Activated naive CD4-positive, alpha-beta T cell treated with anti-CD3 and anti-CD28 coated beads for 36 hours (primary cell): ENCODE measurements at regions of chr17 and their contacts with region 1.

Region 1: GRCh38 chr17:30116661-30117551 is at the start of gene NSRP1:
- DNase-seq: peak; percentile 98
- H3K4me3 Mint-ChIP-seq: peak within 1 kb of the TSS; percentile 97
- H3K27ac Mint-ChIP-seq: peak within 1 kb of the TSS; percentile 99
- H3K4me1 Mint-ChIP-seq: peaks cover 48% of the 10 kb centered on the region
- H3K27me3 Mint-ChIP-seq: no peaks in the 10 kb centered on the region
- total RNA-seq, gene NSRP1: 21.4 to 21.5 TPM

Region 2: GRCh38 chr17:29369831-29370735 is 746.8 kb before region 1 on chr17:
- CTCF ChIA-PET with region 1: no interaction called
- intact Hi-C with region 1: no loop called
- DNase-seq: peak; percentile 59
- H3K4me3 Mint-ChIP-seq: no peak overlapping the region
- H3K27ac Mint-ChIP-seq: no peak overlapping the region
- H3K4me1 Mint-ChIP-seq: no peaks in the 10 kb centered on the region
- H3K27me3 Mint-ChIP-seq: no peaks in the 10 kb centered on the region

Region 3: DNA sequence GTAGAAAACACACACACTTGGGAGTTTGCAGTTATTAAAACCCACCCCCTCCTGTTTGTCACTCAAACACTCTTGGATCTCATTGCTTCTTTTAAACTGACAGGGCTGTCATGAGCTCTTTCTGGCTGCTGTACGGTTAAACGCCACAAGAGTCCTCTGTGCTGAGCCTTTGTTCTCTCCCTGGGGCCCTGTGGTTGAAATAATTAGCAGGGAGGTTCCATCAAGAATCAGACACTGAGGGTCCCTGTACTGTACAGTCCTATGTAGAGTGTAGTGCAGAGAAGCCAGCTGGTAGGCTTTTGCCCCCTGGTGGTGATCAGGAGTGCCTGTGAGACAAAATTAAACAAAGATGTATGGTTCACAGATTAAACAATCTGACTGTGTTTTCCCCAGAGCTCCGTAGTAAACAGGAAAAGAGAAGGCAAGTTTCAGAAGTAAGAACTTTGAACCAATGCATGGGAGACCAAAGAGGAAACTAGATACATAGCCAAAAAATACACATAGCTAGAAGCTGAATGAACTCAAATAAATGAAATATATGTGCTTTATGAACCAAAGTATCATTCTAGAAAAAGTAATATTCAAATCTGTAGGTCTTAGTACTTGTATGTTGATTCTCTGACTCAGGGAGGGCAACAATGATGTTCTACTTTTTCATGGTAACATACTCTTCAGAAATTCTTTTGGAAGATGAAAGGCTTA is 185.5 kb before region 1 on chr17:
- CTCF ChIA-PET with region 1: no interaction called
- intact Hi-C with region 1: no loop called
- DNase-seq: peak; percentile 78
- H3K4me3 Mint-ChIP-seq: no peak overlapping the region
- H3K27ac Mint-ChIP-seq: no peak overlapping the region
- H3K4me1 Mint-ChIP-seq: peaks cover 16% of the 10 kb centered on the region
- H3K27me3 Mint-ChIP-seq: no peaks in the 10 kb centered on the region

Region 4: DNA sequence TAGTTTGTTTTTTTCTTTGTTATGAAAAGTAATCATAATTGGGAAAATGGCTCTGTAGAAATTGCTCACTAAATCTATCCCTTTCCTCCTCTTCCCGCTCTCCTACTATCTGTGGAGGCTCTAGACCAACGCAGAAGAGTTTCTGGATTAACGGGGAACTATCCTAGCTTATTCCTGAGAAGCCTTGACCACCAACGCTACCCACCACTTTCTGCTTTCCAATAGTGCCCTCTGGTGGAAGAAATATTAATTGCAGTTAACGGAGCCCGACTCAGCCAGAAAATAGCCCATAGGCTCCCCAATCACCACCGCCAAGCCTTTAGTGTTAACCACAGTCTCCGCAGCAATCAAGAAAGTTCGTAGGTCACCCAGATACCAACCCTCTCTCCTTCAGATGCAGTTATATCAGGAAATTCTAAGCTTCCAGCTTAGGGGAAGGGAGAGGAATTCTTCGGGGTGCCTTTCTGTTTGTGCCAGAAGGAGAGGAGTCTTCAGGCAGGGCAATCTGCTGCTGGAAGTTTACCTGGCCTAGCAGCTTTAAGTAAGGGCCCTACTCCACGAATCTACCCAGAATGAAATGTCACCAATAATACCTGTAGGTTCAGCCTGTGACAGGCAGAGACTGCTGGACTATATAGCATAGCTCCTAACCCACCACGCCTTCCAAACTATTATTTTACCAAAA is 23.3 kb before region 1 on chr17:
- CTCF ChIA-PET with region 1: interaction called, 13 read pairs
- intact Hi-C with region 1: no loop called
- DNase-seq: peak; percentile 56
- H3K4me3 Mint-ChIP-seq: no peak overlapping the region
- H3K27ac Mint-ChIP-seq: no peak overlapping the region
- H3K4me1 Mint-ChIP-seq: peaks cover 3% of the 10 kb centered on the region
- H3K27me3 Mint-ChIP-seq: peaks cover 9% of the 10 kb centered on the region

Region 5: DNA sequence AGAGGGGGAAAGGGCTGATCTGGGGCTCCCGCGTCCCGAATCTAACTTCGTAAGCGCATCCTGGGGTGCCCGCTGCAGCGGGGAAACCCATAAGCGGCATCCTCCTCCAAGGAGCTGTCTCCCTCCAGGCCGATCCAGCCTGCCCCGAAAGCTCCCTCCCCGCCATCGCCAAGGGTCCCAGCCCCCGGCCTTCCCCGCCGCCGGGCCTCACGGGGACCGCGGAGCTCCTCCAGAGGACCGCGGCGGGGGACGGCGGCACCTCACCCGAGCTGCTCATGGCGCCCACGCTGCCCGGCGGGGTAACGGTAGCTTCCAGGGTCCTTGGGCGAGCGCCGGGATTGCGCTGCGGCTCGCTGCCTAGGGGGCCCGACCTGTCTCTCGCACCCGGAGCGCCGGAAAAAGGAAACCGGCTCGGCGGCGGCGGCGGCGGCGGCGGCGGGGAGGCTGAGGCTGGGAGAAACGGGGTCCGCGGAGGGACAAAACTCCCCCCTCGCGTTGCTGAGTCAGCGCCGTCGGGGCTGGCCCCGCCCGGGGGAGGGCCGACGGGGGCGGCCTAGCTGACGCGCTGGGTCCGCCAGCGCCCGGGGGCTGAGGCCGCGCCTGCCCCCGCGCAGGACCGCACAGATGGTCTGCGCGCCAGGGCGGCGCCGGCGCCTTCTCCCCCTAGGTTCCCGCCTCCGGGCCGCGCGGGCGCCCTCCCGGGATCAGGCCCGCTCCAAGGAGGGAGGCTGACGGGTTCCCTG is 174.8 kb after region 1 on chr17 and contains the start of gene BLMH:
- CTCF ChIA-PET with region 1: no interaction called
- intact Hi-C with region 1: loop called (anchors 2 kb)
- DNase-seq: peak; percentile 85
- H3K4me3 Mint-ChIP-seq: peak within 1 kb of the TSS; percentile 90
- H3K27ac Mint-ChIP-seq: peak within 1 kb of the TSS; percentile 87
- H3K4me1 Mint-ChIP-seq: peaks cover 16% of the 10 kb centered on the region
- H3K27me3 Mint-ChIP-seq: no peaks in the 10 kb centered on the region
- total RNA-seq, gene BLMH: 60.9 to 61.5 TPM

Region 6: GRCh38 chr17:30378824-30379302 is 262.0 kb after region 1 on chr17 and contains the start of gene CPD:
- CTCF ChIA-PET with region 1: interaction called, 3 read pairs
- intact Hi-C with region 1: loop called (anchors 5 kb)
- DNase-seq: peak; percentile 98
- H3K4me3 Mint-ChIP-seq: peak within 1 kb of the TSS; percentile 86
- H3K27ac Mint-ChIP-seq: peak within 1 kb of the TSS; percentile 92
- H3K4me1 Mint-ChIP-seq: peaks cover 64% of the 10 kb centered on the region
- H3K27me3 Mint-ChIP-seq: no peaks in the 10 kb centered on the region
- total RNA-seq, gene CPD: 37.9 to 43.8 TPM

Region 7: GRCh38 chr17:30600049-30600829 is 483.3 kb after region 1 on chr17:
- CTCF ChIA-PET with region 1: no interaction called
- intact Hi-C with region 1: loop called (anchors 5 kb)
- DNase-seq: peak; percentile 73
- H3K4me3 Mint-ChIP-seq: peak overlapping the region; percentile 97
- H3K27ac Mint-ChIP-seq: no peak overlapping the region
- H3K4me1 Mint-ChIP-seq: peaks cover 16% of the 10 kb centered on the region
- H3K27me3 Mint-ChIP-seq: peaks cover 2% of the 10 kb centered on the region

Region 8: GRCh38 chr17:30824356-30825145 is 707.6 kb after region 1 on chr17 and contains the start of gene CRLF3:
- CTCF ChIA-PET with region 1: no interaction called
- intact Hi-C with region 1: loop called (anchors 5 kb)
- DNase-seq: peak; percentile 91
- H3K4me3 Mint-ChIP-seq: peak within 1 kb of the TSS; percentile 85
- H3K27ac Mint-ChIP-seq: peak within 1 kb of the TSS; percentile 94
- H3K4me1 Mint-ChIP-seq: peaks cover 39% of the 10 kb centered on the region
- H3K27me3 Mint-ChIP-seq: no peaks in the 10 kb centered on the region
- total RNA-seq, gene CRLF3: 47.1 to 47.7 TPM